ENCODE measurements at regions of chr5 and their contacts with region 1.

Region 1: DNA sequence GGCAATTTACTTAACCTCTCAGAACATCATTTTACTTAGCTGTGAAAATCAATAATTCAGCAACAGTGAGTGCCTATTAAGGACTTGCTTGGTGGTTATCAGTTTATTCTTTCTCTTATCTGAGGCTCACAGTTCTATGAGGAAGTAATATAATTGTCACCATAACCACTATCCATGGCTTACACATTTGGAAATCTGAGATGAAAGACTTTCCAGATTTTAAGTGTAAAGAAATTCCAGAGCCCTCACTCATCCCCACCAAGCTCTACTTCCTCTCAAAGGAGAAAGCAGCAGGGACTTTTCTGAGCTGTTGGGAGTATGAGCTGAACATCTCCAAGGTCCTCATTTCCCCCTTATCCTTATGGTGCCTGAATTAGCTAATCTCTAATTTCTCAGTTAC is 321.5 kb downstream of the FBXL7 start:
- DNase-seq: no peak
- H3K4me3 Mint-ChIP-seq: no peak overlapping the region
- H3K27ac Mint-ChIP-seq: no peak overlapping the region
- H3K4me1 Mint-ChIP-seq: no peaks in the 10 kb centered on the region
- H3K27me3 Mint-ChIP-seq: no peaks in the 10 kb centered on the region
- CTCF ChIP-seq: no peak

Region 2: DNA sequence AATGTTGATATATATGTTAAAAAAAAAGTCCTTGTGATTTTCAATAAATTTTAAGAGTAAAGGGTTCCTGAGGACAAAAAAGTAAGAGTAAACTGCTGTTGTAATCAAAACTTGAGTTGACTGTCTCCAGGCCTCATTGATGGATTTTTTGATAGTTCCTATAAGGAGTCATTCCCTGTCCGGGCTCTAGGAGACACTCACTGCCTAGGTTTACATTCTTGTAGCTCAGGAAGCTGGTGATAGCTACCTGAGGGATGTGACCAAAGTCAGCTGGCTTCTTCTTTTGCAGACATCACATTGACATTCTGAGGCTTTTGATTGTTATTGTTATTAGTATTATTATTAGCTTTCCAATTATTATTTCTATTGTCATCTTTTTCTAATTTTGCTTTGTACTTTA is 438.0 kb before region 1 on chr5:
- CTCF ChIA-PET with region 1: interaction called, 4 read pairs
- POLR2A ChIA-PET with region 1: interaction called, 3 read pairs
- intact Hi-C with region 1: loop called (anchors 1 kb)
- DNase-seq: peak; percentile 16
- H3K4me3 Mint-ChIP-seq: no peak overlapping the region
- H3K27ac Mint-ChIP-seq: no peak overlapping the region
- H3K4me1 Mint-ChIP-seq: no peaks in the 10 kb centered on the region
- H3K27me3 Mint-ChIP-seq: peaks cover 31% of the 10 kb centered on the region
- CTCF ChIP-seq: peak; percentile 40

Region 3: GRCh38 chr5:15463231-15463980 is 358.1 kb before region 1 on chr5:
- CTCF ChIA-PET with region 1: interaction called, 3 read pairs
- POLR2A ChIA-PET with region 1: no interaction called
- intact Hi-C with region 1: loop called (anchors 1 kb)
- DNase-seq: no peak
- H3K4me3 Mint-ChIP-seq: no peak overlapping the region
- H3K27ac Mint-ChIP-seq: no peak overlapping the region
- H3K4me1 Mint-ChIP-seq: no peaks in the 10 kb centered on the region
- H3K27me3 Mint-ChIP-seq: peaks cover 10% of the 10 kb centered on the region
- CTCF ChIP-seq: peak; percentile 37

Region 4: DNA sequence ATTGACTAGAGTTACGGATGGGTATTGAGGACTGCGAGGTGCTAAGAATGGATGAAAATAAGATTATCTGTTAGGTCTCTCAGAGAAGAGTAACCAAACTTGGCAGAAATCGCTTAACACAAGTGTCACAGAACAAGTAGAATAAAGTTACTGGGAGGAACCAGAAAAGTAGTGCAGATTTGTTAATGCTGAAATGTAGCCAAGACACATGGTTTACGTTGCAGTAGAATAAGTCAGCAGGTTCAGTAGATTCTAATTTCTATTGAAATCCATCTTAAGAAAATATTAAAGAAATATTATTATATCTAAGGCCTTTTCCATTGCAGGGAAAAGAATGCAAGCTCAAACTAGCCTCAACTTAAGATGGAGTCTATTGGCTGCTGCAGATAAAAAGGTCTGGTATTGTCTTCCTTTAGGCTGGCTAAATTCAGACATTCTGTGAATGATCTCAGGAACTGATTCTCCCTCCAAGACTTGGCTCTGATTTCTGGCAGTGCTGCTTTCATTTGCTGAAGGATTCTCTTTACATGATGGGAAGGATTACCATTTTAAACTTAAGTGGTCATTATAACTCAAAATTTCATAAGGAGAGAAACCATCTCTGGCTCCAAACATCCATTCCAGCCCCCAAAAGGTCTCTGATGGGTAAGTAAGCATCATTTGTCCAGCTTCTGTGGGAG is 43.2 kb after region 1 on chr5:
- CTCF ChIA-PET with region 1: no interaction called
- POLR2A ChIA-PET with region 1: no interaction called
- intact Hi-C with region 1: no loop called
- DNase-seq: no peak
- H3K4me3 Mint-ChIP-seq: no peak overlapping the region
- H3K27ac Mint-ChIP-seq: no peak overlapping the region
- H3K4me1 Mint-ChIP-seq: no peaks in the 10 kb centered on the region
- H3K27me3 Mint-ChIP-seq: no peaks in the 10 kb centered on the region
- CTCF ChIP-seq: no peak

Measured in MCF 10A (cell line).